ENCODE measurements at regions of chr20 and their contacts with region 1.

Region 1: DNA sequence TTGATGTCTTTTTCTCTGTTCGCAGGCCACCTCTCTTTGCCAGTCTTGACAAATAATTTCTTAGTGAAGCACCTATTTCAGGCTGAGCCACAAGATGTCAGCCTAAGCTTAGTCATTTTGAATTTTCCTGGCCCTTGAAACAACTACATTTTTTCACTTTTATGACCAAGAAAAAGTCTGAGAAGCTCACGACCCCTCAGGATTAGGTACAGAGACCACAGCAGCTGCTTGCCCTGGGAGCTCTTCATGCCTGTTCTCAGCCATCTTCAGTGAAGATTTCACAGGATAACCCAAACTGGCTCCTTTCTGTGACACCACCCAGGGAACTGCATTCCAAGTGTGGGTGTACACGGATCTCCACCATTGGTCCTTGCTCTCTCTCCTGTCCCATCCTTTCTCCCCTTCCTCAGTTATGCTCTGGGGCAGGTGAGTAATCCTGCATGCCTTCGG is 38.4 kb upstream of the SPTLC3 start:
- DNase-seq: peak in 1 of 2 experiments; percentile 55
- H3K4me3 ChIP-seq: no peak overlapping the region
- H3K4me3 Mint-ChIP-seq: no peak overlapping the region
- H3K27ac Mint-ChIP-seq: no peak overlapping the region
- H3K4me1 ChIP-seq: peaks cover 4% of the 10 kb centered on the region; the same call in 1 of the 2 replicates
- H3K4me1 Mint-ChIP-seq: peaks cover 7% of the 10 kb centered on the region
- H3K27me3 ChIP-seq: no peaks in the 10 kb centered on the region
- H3K27me3 Mint-ChIP-seq: no peaks in the 10 kb centered on the region
- CTCF ChIP-seq: peak; percentile 52 to 61

Region 2: GRCh38 chr20:12925214-12925755 is 45.1 kb before region 1 on chr20:
- CTCF ChIA-PET with region 1: interaction called, 16 read pairs
- POLR2A ChIA-PET with region 1: no interaction called
- intact Hi-C with region 1: loop called (anchors 1 kb)
- DNase-seq: peak; percentile 79
- H3K4me3 ChIP-seq: no peak overlapping the region
- H3K4me3 Mint-ChIP-seq: peak overlapping the region; percentile 43
- H3K27ac Mint-ChIP-seq: no peak overlapping the region
- H3K4me1 ChIP-seq: peaks cover 27% of the 10 kb centered on the region
- H3K4me1 Mint-ChIP-seq: peaks cover 23% of the 10 kb centered on the region
- H3K27me3 ChIP-seq: no peaks in the 10 kb centered on the region
- H3K27me3 Mint-ChIP-seq: no peaks in the 10 kb centered on the region
- CTCF ChIP-seq: peak; percentile 93 to 97

Region 3: GRCh38 chr20:12936036-12936435 is 34.4 kb before region 1 on chr20:
- CTCF ChIA-PET with region 1: no interaction called
- POLR2A ChIA-PET with region 1: no interaction called
- intact Hi-C with region 1: no loop called
- DNase-seq: no peak
- H3K4me3 ChIP-seq: no peak overlapping the region
- H3K4me3 Mint-ChIP-seq: no peak overlapping the region
- H3K27ac Mint-ChIP-seq: no peak overlapping the region
- H3K4me1 ChIP-seq: no peaks in the 10 kb centered on the region
- H3K4me1 Mint-ChIP-seq: peaks cover 11% of the 10 kb centered on the region
- H3K27me3 ChIP-seq: no peaks in the 10 kb centered on the region
- H3K27me3 Mint-ChIP-seq: no peaks in the 10 kb centered on the region
- CTCF ChIP-seq: no peak

Region 4: DNA sequence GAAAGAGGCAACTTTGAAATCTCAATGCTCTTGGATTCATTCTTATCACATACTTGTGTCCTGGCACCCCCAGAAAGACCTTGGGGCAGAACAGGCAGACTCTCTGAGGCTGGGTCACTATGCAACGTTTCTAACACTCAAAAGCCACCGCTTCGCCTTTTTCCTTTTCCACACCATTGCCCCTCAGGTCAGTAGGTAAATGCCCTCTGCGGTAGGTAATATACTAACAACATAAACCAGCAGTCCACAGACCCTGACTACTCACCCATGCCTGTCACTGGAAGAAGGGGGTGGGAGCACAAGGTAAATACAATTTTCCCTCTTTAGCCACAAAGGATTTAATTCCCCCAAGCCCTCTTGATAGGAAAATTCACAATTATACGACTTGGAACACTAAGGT is 31.9 kb after region 1 on chr20:
- CTCF ChIA-PET with region 1: no interaction called
- POLR2A ChIA-PET with region 1: no interaction called
- intact Hi-C with region 1: no loop called
- DNase-seq: no peak
- H3K4me3 ChIP-seq: no peak overlapping the region
- H3K4me3 Mint-ChIP-seq: no peak overlapping the region
- H3K27ac Mint-ChIP-seq: no peak overlapping the region
- H3K4me1 ChIP-seq: peaks cover 21% of the 10 kb centered on the region
- H3K4me1 Mint-ChIP-seq: peaks cover 31% of the 10 kb centered on the region
- H3K27me3 ChIP-seq: no peaks in the 10 kb centered on the region
- H3K27me3 Mint-ChIP-seq: no peaks in the 10 kb centered on the region
- CTCF ChIP-seq: no peak

Region 5: GRCh38 chr20:13022401-13023155 is 52.2 kb after region 1 on chr20:
- CTCF ChIA-PET with region 1: no interaction called
- POLR2A ChIA-PET with region 1: no interaction called
- intact Hi-C with region 1: no loop called
- DNase-seq: no peak
- H3K4me3 ChIP-seq: no peak overlapping the region
- H3K4me3 Mint-ChIP-seq: no peak overlapping the region
- H3K27ac Mint-ChIP-seq: no peak overlapping the region
- H3K4me1 ChIP-seq: no peaks in the 10 kb centered on the region
- H3K4me1 Mint-ChIP-seq: peaks cover 13% of the 10 kb centered on the region
- H3K27me3 ChIP-seq: no peaks in the 10 kb centered on the region
- H3K27me3 Mint-ChIP-seq: no peaks in the 10 kb centered on the region
- CTCF ChIP-seq: no peak

Region 6: DNA sequence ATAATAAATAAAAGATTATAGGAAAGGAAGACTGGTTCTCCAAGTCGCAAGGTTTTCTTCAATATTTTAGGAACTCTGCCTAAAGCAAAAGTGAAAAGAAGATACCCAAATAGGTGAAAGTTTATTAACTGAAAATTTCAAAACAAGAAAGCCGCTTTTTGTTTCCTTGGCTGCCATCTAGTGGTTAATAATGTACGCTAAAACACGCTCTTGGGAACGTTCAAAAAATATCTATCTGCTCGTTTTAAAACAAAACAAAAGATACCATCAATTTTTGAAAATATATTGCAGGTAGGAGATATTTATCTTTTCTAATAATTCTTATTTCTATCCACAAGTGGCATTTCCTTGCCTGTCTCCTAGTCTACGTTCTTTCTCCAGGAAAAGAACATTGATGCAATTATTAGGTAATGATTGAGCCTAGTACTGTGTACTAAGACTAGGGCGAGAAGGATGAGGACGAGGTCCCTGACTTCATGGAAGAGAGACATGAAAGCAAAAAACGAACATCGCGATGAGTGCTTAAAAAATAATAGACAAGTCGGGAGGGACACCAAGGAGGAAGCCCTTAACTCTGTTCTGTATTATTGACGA is 135.6 kb after region 1 on chr20:
- CTCF ChIA-PET with region 1: interaction called, 13 read pairs
- POLR2A ChIA-PET with region 1: no interaction called
- intact Hi-C with region 1: loop called (anchors 1 kb)
- DNase-seq: peak in 1 of 2 experiments; percentile 37
- H3K4me3 ChIP-seq: no peak overlapping the region
- H3K4me3 Mint-ChIP-seq: no peak overlapping the region
- H3K27ac Mint-ChIP-seq: no peak overlapping the region
- H3K4me1 ChIP-seq: peaks cover 46% of the 10 kb centered on the region
- H3K4me1 Mint-ChIP-seq: peaks cover 23% of the 10 kb centered on the region
- H3K27me3 ChIP-seq: no peaks in the 10 kb centered on the region
- H3K27me3 Mint-ChIP-seq: no peaks in the 10 kb centered on the region
- CTCF ChIP-seq: peak; percentile 70 to 71

Region 7: GRCh38 chr20:13131688-13132087 is 161.3 kb after region 1 on chr20:
- CTCF ChIA-PET with region 1: no interaction called
- POLR2A ChIA-PET with region 1: no interaction called
- intact Hi-C with region 1: no loop called
- DNase-seq: no peak
- H3K4me3 ChIP-seq: no peak overlapping the region
- H3K4me3 Mint-ChIP-seq: no peak overlapping the region
- H3K27ac Mint-ChIP-seq: no peak overlapping the region
- H3K4me1 ChIP-seq: no peaks in the 10 kb centered on the region
- H3K4me1 Mint-ChIP-seq: no peaks in the 10 kb centered on the region
- H3K27me3 ChIP-seq: no peaks in the 10 kb centered on the region
- H3K27me3 Mint-ChIP-seq: no peaks in the 10 kb centered on the region
- CTCF ChIP-seq: no peak

Region 8: GRCh38 chr20:13302647-13303450 is 332.5 kb after region 1 on chr20:
- CTCF ChIA-PET with region 1: interaction called, 4 read pairs
- POLR2A ChIA-PET with region 1: no interaction called
- intact Hi-C with region 1: loop called (anchors 5 kb)
- DNase-seq: peak; percentile 62 to 71
- H3K4me3 ChIP-seq: no peak overlapping the region
- H3K4me3 Mint-ChIP-seq: peak overlapping the region; percentile 42
- H3K27ac Mint-ChIP-seq: peak overlapping the region; percentile 89
- H3K4me1 ChIP-seq: peaks cover 32% of the 10 kb centered on the region
- H3K4me1 Mint-ChIP-seq: peaks cover 18% of the 10 kb centered on the region
- H3K27me3 ChIP-seq: no peaks in the 10 kb centered on the region
- H3K27me3 Mint-ChIP-seq: no peaks in the 10 kb centered on the region
- CTCF ChIP-seq: peak; percentile 56 to 66

Region 9: GRCh38 chr20:13771853-13772453 is 801.6 kb after region 1 on chr20:
- CTCF ChIA-PET with region 1: no interaction called
- POLR2A ChIA-PET with region 1: no interaction called
- intact Hi-C with region 1: loop called (anchors 5 kb)
- DNase-seq: no peak
- H3K4me3 ChIP-seq: no peak overlapping the region
- H3K4me3 Mint-ChIP-seq: no peak overlapping the region
- H3K27ac Mint-ChIP-seq: no peak overlapping the region
- H3K4me1 ChIP-seq: no peaks in the 10 kb centered on the region; the same call in 1 of the 2 replicates
- H3K4me1 Mint-ChIP-seq: no peaks in the 10 kb centered on the region
- H3K27me3 ChIP-seq: no peaks in the 10 kb centered on the region
- H3K27me3 Mint-ChIP-seq: no peaks in the 10 kb centered on the region
- CTCF ChIP-seq: peak in 1 of 2 experiments; percentile 60

Measured in Caco-2 (cell line).